Panc1 (cell line): ENCODE measurements at regions of chr15 and their contacts with region 1.

Region 1: GRCh38 chr15:53808058-53808706 is 48.7 kb upstream of the WDR72 start:
- DNase-seq: peak; percentile 13
- ATAC-seq: 0 out of 2 replicates have a peak, but pooled peaks have one; percentile 45
- H3K4me3 ChIP-seq: no peak overlapping the region
- H3K27ac ChIP-seq: no peak overlapping the region
- H3K4me1 ChIP-seq: no peaks in the 10 kb centered on the region
- H3K27me3 ChIP-seq: no peaks in the 10 kb centered on the region
- CTCF ChIP-seq: peak; percentile 76

Region 2: DNA sequence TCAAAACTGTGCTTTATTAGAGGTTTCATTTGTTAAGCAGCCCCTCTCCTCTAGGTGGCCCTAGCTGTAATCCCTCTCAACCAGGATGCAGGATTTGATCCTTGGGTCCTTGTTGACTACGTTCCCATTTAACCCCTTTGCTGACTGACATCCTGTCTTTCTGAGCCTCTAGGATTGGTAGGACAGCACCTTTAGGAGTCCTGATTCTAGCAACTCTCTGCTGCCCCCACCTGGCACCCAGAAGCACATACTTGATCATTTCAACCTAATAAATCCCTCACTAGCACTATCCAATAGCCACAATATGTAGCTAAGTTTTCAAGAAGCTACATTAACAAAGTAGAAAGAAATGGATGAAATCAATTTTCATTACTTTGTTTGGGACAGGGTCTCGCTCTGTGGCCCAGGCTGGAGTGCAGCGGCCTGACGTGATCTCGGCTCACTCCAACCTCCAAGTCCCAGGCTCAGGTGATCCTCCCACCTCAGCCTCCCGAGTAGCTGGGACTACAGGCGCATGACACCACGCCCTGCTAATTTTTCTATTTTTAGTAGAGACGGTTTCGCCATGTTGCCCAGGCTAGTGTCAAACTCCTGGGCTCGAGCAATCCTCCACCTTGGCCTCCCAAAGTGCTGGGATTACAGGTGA is 1360.3 kb after region 1 on chr15:
- CTCF ChIA-PET with region 1: interaction called, 3 read pairs
- POLR2A ChIA-PET with region 1: no interaction called
- in situ Hi-C with region 1: no loop called
- intact Hi-C with region 1: loop called (anchors 5 kb)
- DNase-seq: peak; percentile 48
- ATAC-seq: peak; percentile 98
- H3K4me3 ChIP-seq: no peak overlapping the region
- H3K27ac ChIP-seq: no peak overlapping the region
- H3K4me1 ChIP-seq: no peaks in the 10 kb centered on the region
- H3K27me3 ChIP-seq: no peaks in the 10 kb centered on the region
- CTCF ChIP-seq: peak; percentile 94